ENCODE measurements at regions of chr12 and their contacts with region 1.

Region 1: DNA sequence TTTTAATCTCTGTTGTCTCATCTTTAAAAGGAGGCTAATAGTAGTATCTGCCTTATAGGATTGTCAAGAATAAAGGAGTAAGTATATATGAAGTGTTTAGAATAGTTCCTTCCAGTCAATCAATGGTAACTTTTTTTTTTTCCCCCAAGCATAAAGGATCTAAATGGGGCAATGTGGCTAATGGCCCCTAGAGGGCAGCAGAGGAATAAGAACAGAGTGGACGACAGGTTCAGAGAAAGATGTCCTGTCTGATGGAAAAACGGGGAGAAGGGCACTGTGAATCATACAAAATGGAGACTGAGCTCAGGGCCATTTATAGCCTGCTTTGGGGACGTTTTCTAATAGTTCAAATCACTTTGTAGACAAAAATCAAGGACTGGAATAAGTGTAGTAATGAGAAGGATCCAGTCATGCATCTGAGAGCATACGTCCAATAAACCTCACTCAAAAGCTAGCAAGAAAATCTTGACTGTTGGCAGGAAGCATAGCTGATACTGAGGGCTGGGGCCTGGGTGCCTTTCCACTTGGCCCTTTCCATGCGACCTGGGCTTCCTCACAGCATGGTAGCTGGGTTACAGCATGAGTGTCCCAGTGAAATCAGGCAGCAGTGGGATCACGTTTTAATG is 51.3 kb downstream of the IFNG-AS1 start:
- DNase-seq: peak; percentile 79
- ATAC-seq: peak; percentile 67
- H3K4me3 ChIP-seq: no peak overlapping the region
- H3K4me3 Mint-ChIP-seq: peak overlapping the region; percentile 1
- H3K27ac ChIP-seq: no peak overlapping the region
- H3K27ac Mint-ChIP-seq: no peak overlapping the region
- H3K4me1 ChIP-seq: peaks cover 11 to 15% of the 10 kb centered on the region in 2 donors
- H3K4me1 Mint-ChIP-seq: peaks cover 20% of the 10 kb centered on the region
- H3K27me3 ChIP-seq: no peaks in the 10 kb centered on the region
- H3K27me3 Mint-ChIP-seq: no peaks in the 10 kb centered on the region
- CTCF ChIP-seq: peak; percentile 99

Region 2: GRCh38 chr12:67355578-67356379 is 684.8 kb before region 1 on chr12:
- CTCF ChIA-PET with region 1: interaction called, 64 read pairs
- POLR2A ChIA-PET with region 1: no interaction called
- intact Hi-C with region 1: loop called (anchors 1 kb)
- DNase-seq: peak; percentile 74
- ATAC-seq: no peak
- H3K4me3 ChIP-seq: no peak overlapping the region
- H3K4me3 Mint-ChIP-seq: no peak overlapping the region
- H3K27ac ChIP-seq: no peak overlapping the region
- H3K27ac Mint-ChIP-seq: no peak overlapping the region
- H3K4me1 ChIP-seq: peaks cover 3 to 7% of the 10 kb centered on the region in 2 donors
- H3K4me1 Mint-ChIP-seq: peaks cover 4% of the 10 kb centered on the region
- H3K27me3 ChIP-seq: no peaks in the 10 kb centered on the region
- H3K27me3 Mint-ChIP-seq: no peaks in the 10 kb centered on the region
- CTCF ChIP-seq: peak; percentile 80

Region 3: GRCh38 chr12:67910360-67911274 is 129.9 kb before region 1 on chr12:
- CTCF ChIA-PET with region 1: no interaction called
- POLR2A ChIA-PET with region 1: no interaction called
- intact Hi-C with region 1: no loop called
- DNase-seq: no peak
- ATAC-seq: no peak
- H3K4me3 ChIP-seq: no peak overlapping the region
- H3K4me3 Mint-ChIP-seq: no peak overlapping the region
- H3K27ac ChIP-seq: no peak overlapping the region
- H3K27ac Mint-ChIP-seq: no peak overlapping the region
- H3K4me1 ChIP-seq: no peaks in the 10 kb centered on the region
- H3K4me1 Mint-ChIP-seq: no peaks in the 10 kb centered on the region
- H3K27me3 ChIP-seq: peaks cover 0 to 4% (median 0%) of the 10 kb centered on the region in 4 experiments
- H3K27me3 Mint-ChIP-seq: peaks cover 17% of the 10 kb centered on the region
- CTCF ChIP-seq: no peak

Region 4: GRCh38 chr12:68001486-68002466 is 38.8 kb before region 1 on chr12:
- CTCF ChIA-PET with region 1: interaction called, 8 read pairs
- POLR2A ChIA-PET with region 1: no interaction called
- intact Hi-C with region 1: loop called (anchors 1 kb)
- DNase-seq: peak; percentile 33
- ATAC-seq: no peak
- H3K4me3 ChIP-seq: no peak overlapping the region
- H3K4me3 Mint-ChIP-seq: no peak overlapping the region
- H3K27ac ChIP-seq: peak overlapping the region in 1 of 2 donors; percentile 23
- H3K27ac Mint-ChIP-seq: no peak overlapping the region
- H3K4me1 ChIP-seq: peaks cover 6% of the 10 kb centered on the region in 2 donors
- H3K4me1 Mint-ChIP-seq: peaks cover 7% of the 10 kb centered on the region
- H3K27me3 ChIP-seq: no peaks in the 10 kb centered on the region
- H3K27me3 Mint-ChIP-seq: no peaks in the 10 kb centered on the region
- CTCF ChIP-seq: peak; percentile 63

Region 5: DNA sequence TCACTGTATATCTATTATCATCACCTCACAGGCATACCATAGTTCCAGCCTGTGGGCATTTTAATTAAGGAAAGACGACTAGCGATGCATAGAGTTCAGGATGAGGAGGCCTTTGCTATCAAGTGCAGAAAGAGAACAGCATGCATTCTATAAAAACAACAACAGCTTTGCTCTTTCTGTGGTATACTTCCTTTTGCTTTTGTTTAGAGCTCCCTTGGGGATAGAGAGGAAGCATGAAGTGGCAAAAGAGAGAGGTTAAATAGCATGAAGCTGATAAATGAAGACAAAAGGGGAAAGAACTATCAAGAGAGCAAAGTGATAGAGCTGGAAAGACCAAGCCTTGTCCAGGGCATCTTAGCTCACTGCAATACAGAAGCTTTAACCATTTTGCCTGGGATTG is 27.9 kb before region 1 on chr12:
- CTCF ChIA-PET with region 1: interaction called, 22 read pairs
- POLR2A ChIA-PET with region 1: interaction called, 4 read pairs
- intact Hi-C with region 1: loop called (anchors 1 kb)
- DNase-seq: peak; percentile 74
- ATAC-seq: peak; percentile 91
- H3K4me3 ChIP-seq: peak overlapping the region in 1 of 5 experiments; percentile 6
- H3K4me3 Mint-ChIP-seq: peak overlapping the region; percentile 54
- H3K27ac ChIP-seq: no peak overlapping the region
- H3K27ac Mint-ChIP-seq: peak overlapping the region; percentile 54
- H3K4me1 ChIP-seq: peaks cover 28% of the 10 kb centered on the region in 2 donors
- H3K4me1 Mint-ChIP-seq: peaks cover 45% of the 10 kb centered on the region
- H3K27me3 ChIP-seq: no peaks in the 10 kb centered on the region
- H3K27me3 Mint-ChIP-seq: no peaks in the 10 kb centered on the region
- CTCF ChIP-seq: no peak

Region 6: GRCh38 chr12:68223083-68223747 is 182.7 kb after region 1 on chr12:
- CTCF ChIA-PET with region 1: interaction called, 11 read pairs
- POLR2A ChIA-PET with region 1: no interaction called
- intact Hi-C with region 1: no loop called
- DNase-seq: peak; percentile 85
- ATAC-seq: peak; percentile 97
- H3K4me3 ChIP-seq: no peak overlapping the region
- H3K4me3 Mint-ChIP-seq: peak overlapping the region; percentile 66
- H3K27ac ChIP-seq: no peak overlapping the region
- H3K27ac Mint-ChIP-seq: no peak overlapping the region
- H3K4me1 ChIP-seq: peaks cover 6 to 7% of the 10 kb centered on the region in 2 donors
- H3K4me1 Mint-ChIP-seq: peaks cover 6% of the 10 kb centered on the region
- H3K27me3 ChIP-seq: no peaks in the 10 kb centered on the region
- H3K27me3 Mint-ChIP-seq: peaks cover 9% of the 10 kb centered on the region
- CTCF ChIP-seq: peak; percentile 87

Region 7: GRCh38 chr12:69070319-69071090 is 1029.9 kb after region 1 on chr12:
- CTCF ChIA-PET with region 1: no interaction called
- POLR2A ChIA-PET with region 1: no interaction called
- intact Hi-C with region 1: loop called (anchors 10 kb)
- DNase-seq: peak; percentile 71
- ATAC-seq: peak; percentile 78
- H3K4me3 ChIP-seq: no peak overlapping the region
- H3K4me3 Mint-ChIP-seq: no peak overlapping the region
- H3K27ac ChIP-seq: no peak overlapping the region
- H3K27ac Mint-ChIP-seq: no peak overlapping the region
- H3K4me1 ChIP-seq: no peaks in the 10 kb centered on the region
- H3K4me1 Mint-ChIP-seq: no peaks in the 10 kb centered on the region
- H3K27me3 ChIP-seq: peaks cover 0 to 3% (median 0%) of the 10 kb centered on the region in 4 experiments
- H3K27me3 Mint-ChIP-seq: peaks cover 23% of the 10 kb centered on the region
- CTCF ChIP-seq: peak; percentile 87